ENCODE measurements at regions of chr3 and their contacts with region 1.

Region 1: DNA sequence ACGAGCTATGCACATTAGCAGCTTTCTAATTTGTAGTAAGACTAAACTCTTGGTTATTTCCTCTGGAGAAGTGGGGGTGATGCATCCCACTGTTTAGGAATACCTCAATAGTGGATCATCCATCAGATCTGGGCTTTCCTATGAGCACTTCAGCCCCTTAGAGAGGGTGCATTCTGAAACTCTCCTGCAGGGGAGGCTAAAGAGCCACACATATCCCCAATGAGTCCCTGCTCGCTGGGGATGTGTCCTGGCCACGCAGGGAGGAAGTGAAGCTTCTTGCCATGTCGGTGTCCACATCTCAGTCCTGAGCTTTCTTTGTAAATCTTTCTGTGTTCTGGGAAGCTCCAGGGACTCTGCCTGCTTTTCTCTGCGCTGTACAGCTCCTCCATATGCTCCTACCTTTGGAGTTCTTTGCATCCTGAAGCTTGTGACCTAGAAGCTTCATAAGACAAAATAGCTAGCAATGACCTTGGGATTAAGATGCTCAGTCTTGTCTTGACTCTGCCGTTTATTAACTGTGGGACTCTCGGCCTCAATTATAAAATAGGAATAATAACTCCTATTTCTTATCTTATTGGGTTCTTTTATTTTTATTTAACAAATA is 28.3 kb upstream of the MASP1 start:
- DNase-seq: peak; percentile 61 to 67 (median 62)
- ATAC-seq: peak; percentile 97
- H3K4me3 ChIP-seq: no peak overlapping the region
- H3K27ac ChIP-seq: no peak overlapping the region
- H3K4me1 ChIP-seq: no peaks in the 10 kb centered on the region; a peak in 1 of 5 replicates
- H3K27me3 ChIP-seq: no peaks in the 10 kb centered on the region; a peak in 1 of 5 replicates
- CTCF ChIP-seq: peak; percentile 79 to 86 (median 82)
- EP300 ChIP-seq: no peak
- POLR2A ChIP-seq: no peak
- RAD21 ChIP-seq: peak; percentile 94 to 97

Region 2: GRCh38 chr3:187305881-187306280 is 13.9 kb before region 1 on chr3:
- CTCF ChIA-PET with region 1: no interaction called
- POLR2A ChIA-PET with region 1: no interaction called
- in situ Hi-C with region 1: no loop called
- intact Hi-C with region 1: no loop called
- DNase-seq: no peak
- ATAC-seq: 0 out of 3 replicates have a peak, but pooled peaks have one; percentile 29
- H3K4me3 ChIP-seq: no peak overlapping the region
- H3K27ac ChIP-seq: no peak overlapping the region
- H3K4me1 ChIP-seq: no peaks in the 10 kb centered on the region
- H3K27me3 ChIP-seq: no peaks in the 10 kb centered on the region
- CTCF ChIP-seq: no peak
- EP300 ChIP-seq: no peak
- POLR2A ChIP-seq: no peak
- RAD21 ChIP-seq: no peak

Region 3: GRCh38 chr3:187430576-187430975 is 110.8 kb after region 1 on chr3:
- CTCF ChIA-PET with region 1: no interaction called
- POLR2A ChIA-PET with region 1: no interaction called
- in situ Hi-C with region 1: no loop called
- intact Hi-C with region 1: loop called (anchors 10 kb)
- DNase-seq: peak; percentile 14 to 21 (median 18)
- ATAC-seq: peak; percentile 75
- H3K4me3 ChIP-seq: no peak overlapping the region
- H3K27ac ChIP-seq: no peak overlapping the region
- H3K4me1 ChIP-seq: no peaks in the 10 kb centered on the region
- H3K27me3 ChIP-seq: no peaks in the 10 kb centered on the region; a peak in 1 of 5 replicates
- CTCF ChIP-seq: peak; percentile 51 to 72 (median 63)
- EP300 ChIP-seq: no peak
- POLR2A ChIP-seq: no peak
- RAD21 ChIP-seq: peak; percentile 53 to 69

Region 4: DNA sequence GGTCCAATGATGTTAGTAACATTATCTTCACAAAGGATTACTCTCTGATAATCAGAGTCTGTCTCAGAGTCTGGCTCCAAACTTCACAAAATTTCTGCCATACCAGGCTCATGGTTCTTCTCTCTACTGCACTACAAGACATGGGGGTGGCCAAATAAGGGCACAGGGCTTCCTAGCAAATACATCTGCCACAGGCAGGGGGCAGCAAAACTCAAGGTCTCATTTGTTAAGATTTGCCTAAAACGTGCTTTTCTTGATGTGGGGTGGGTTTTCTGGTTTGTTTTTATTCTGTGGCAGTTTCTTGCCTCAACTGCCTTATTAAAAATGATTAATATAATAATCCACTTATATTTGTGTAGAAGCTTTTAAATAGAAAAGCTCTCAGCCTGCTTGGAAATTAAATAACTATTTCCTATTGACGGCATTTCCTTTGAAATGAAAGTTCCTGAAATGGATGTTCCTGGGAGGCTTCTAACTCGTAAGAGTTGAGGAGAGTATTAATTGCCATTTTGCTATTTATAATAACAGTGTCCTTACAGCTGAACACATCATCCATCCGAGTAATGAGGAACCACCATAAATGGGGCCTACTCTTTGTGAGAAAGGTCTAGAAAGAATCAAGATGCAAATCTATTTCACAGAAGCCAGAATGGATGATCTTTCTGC is 296.6 kb after region 1 on chr3:
- CTCF ChIA-PET with region 1: interaction called, 3 read pairs
- POLR2A ChIA-PET with region 1: no interaction called
- in situ Hi-C with region 1: no loop called
- intact Hi-C with region 1: loop called (anchors 1 kb)
- DNase-seq: peak; percentile 41 to 63 (median 50)
- ATAC-seq: peak; percentile 91
- H3K4me3 ChIP-seq: no peak overlapping the region
- H3K27ac ChIP-seq: no peak overlapping the region
- H3K4me1 ChIP-seq: no peaks in the 10 kb centered on the region
- H3K27me3 ChIP-seq: no peaks in the 10 kb centered on the region
- CTCF ChIP-seq: peak; percentile 58 to 75 (median 69); a peak in 5 of 6 replicates
- EP300 ChIP-seq: no peak
- POLR2A ChIP-seq: no peak
- RAD21 ChIP-seq: peak; percentile 50 to 64

Region 5: GRCh38 chr3:187714404-187714979 is 394.7 kb after region 1 on chr3:
- CTCF ChIA-PET with region 1: interaction called, 30 read pairs
- POLR2A ChIA-PET with region 1: no interaction called
- in situ Hi-C with region 1: no loop called
- intact Hi-C with region 1: loop called (anchors 1 kb)
- DNase-seq: peak; percentile 66 to 76 (median 72)
- ATAC-seq: peak; percentile 92
- H3K4me3 ChIP-seq: no peak overlapping the region
- H3K27ac ChIP-seq: no peak overlapping the region
- H3K4me1 ChIP-seq: no peaks in the 10 kb centered on the region
- H3K27me3 ChIP-seq: no peaks in the 10 kb centered on the region
- CTCF ChIP-seq: peak; percentile 79 to 93 (median 81)
- EP300 ChIP-seq: no peak
- POLR2A ChIP-seq: no peak
- RAD21 ChIP-seq: peak; percentile 92

Region 6: DNA sequence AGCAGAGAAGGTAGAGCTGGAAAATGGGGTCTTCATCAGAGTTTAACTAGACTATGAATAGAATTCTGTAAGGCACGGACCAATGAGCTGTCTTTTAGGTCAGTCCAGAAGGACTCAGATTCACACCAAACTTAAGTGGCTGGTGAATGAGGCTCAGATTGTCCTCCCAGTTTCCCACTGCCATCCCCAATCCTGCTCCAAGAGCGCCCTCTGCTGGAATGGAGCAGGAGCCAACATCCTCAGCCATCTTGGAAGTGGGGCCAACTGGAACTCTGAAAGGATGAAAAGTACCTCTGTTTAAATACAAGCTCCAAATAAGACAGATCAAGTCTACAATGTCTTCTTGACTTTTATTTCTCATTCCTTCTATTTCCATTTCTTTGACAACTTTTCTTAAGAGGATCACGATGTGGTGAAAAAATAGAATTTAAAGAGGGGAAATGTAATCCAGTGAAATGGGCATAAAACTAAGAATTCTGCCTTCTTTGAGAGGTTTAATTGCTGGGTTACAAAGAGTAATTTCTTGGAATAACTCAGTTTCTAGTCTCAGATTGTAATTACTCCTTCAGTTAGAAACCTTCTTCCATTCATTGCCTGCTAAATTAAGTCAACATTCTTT is 1634.9 kb after region 1 on chr3:
- CTCF ChIA-PET with region 1: interaction called, 8 read pairs
- POLR2A ChIA-PET with region 1: no interaction called
- in situ Hi-C with region 1: no loop called
- intact Hi-C with region 1: loop called (anchors 5 kb)
- DNase-seq: peak; percentile 75 to 79 (median 76)
- ATAC-seq: peak; percentile 96
- H3K4me3 ChIP-seq: no peak overlapping the region
- H3K27ac ChIP-seq: no peak overlapping the region
- H3K4me1 ChIP-seq: no peaks in the 10 kb centered on the region
- H3K27me3 ChIP-seq: no peaks in the 10 kb centered on the region
- CTCF ChIP-seq: peak; percentile 78 to 86 (median 85)
- EP300 ChIP-seq: no peak
- POLR2A ChIP-seq: no peak
- RAD21 ChIP-seq: peak; percentile 89 to 94